ENCODE measurements at regions of chr2 and their contacts with region 1.

Region 1: GRCh38 chr2:42974721-42975717 is 182.6 kb upstream of the HAAO start:
- DNase-seq: peak; percentile 95
- H3K4me3 ChIP-seq: peak overlapping the region; percentile 27 to 32; a peak in 3 of 4 replicates
- H3K27ac ChIP-seq: no peak overlapping the region; a peak in 1 of 4 replicates
- H3K4me1 ChIP-seq: peaks cover 11 to 14% of the 10 kb centered on the region in 2 experiments; a peak in 3 of 4 replicates
- H3K27me3 ChIP-seq: no peaks in the 10 kb centered on the region
- CTCF ChIP-seq: peak; percentile 95
- EP300 ChIP-seq: no peak
- RAD21 ChIP-seq: peak; percentile 97

Region 2: GRCh38 chr2:42706836-42707235 is 268.2 kb before region 1 on chr2:
- CTCF ChIA-PET with region 1: no interaction called
- POLR2A ChIA-PET with region 1: no interaction called
- DNase-seq: no peak
- H3K4me3 ChIP-seq: no peak overlapping the region
- H3K27ac ChIP-seq: no peak overlapping the region
- H3K4me1 ChIP-seq: no peaks in the 10 kb centered on the region; a peak in 1 of 4 replicates
- H3K27me3 ChIP-seq: no peaks in the 10 kb centered on the region
- CTCF ChIP-seq: no peak
- EP300 ChIP-seq: no peak
- RAD21 ChIP-seq: no peak

Region 3: GRCh38 chr2:42964439-42965083 is 10.5 kb before region 1 on chr2:
- CTCF ChIA-PET with region 1: interaction called, 54 read pairs
- POLR2A ChIA-PET with region 1: no interaction called
- DNase-seq: no peak
- H3K4me3 ChIP-seq: no peak overlapping the region
- H3K27ac ChIP-seq: peak overlapping the region; percentile 43 to 85; a peak in 3 of 4 replicates
- H3K4me1 ChIP-seq: peaks cover 38 to 41% of the 10 kb centered on the region in 2 experiments; a peak in 3 of 4 replicates
- H3K27me3 ChIP-seq: no peaks in the 10 kb centered on the region
- CTCF ChIP-seq: no peak
- EP300 ChIP-seq: peak in 1 of 2 experiments; percentile 94; a peak in 2 of 4 replicates
- RAD21 ChIP-seq: no peak

Region 4: GRCh38 chr2:43024515-43025011 is 49.5 kb after region 1 on chr2:
- CTCF ChIA-PET with region 1: interaction called, 29 read pairs
- POLR2A ChIA-PET with region 1: no interaction called
- DNase-seq: peak; percentile 96
- H3K4me3 ChIP-seq: no peak overlapping the region
- H3K27ac ChIP-seq: peak overlapping the region in 1 of 2 experiments; percentile 52; a peak in 1 of 4 replicates
- H3K4me1 ChIP-seq: peaks cover 0 to 14% of the 10 kb centered on the region in 2 experiments; a peak in 1 of 4 replicates
- H3K27me3 ChIP-seq: no peaks in the 10 kb centered on the region
- CTCF ChIP-seq: peak; percentile 97
- EP300 ChIP-seq: peak in 1 of 2 experiments; percentile 33; a peak in 1 of 4 replicates
- RAD21 ChIP-seq: peak; percentile 97

Region 5: DNA sequence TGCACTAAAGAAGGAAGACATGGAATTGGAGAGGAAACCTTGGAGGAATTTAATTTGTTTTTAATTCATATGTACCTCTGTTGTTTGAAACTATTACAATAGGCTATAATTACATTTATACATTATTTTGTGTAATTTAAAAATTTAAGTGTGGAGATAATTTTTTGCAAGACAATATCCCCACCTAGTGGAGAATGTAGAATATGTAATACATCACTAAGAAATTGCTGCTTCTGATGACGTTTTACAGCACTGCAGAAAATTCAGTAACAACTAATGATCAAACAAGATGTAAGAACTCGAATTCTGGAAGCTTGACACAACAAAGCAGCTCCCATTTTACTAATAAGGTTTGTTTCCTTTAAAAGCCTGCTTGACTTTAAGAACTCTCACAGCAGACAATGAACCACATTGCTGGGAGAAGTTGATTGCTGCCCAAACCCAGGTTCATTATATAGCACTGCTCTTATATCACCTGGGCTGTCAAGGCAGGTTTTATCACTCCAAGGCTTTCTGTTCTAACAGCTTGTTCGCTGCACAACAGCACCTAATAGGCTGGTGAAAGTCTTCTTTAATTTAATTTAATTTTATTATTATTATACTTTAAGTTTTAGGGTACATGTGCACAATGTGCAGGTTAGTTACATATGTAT is 567.4 kb after region 1 on chr2:
- CTCF ChIA-PET with region 1: interaction called, 41 read pairs
- POLR2A ChIA-PET with region 1: no interaction called
- DNase-seq: peak; percentile 52
- H3K4me3 ChIP-seq: no peak overlapping the region
- H3K27ac ChIP-seq: peak overlapping the region in 1 of 2 experiments; percentile 28; a peak in 1 of 4 replicates
- H3K4me1 ChIP-seq: peaks cover 8 to 13% of the 10 kb centered on the region in 2 experiments
- H3K27me3 ChIP-seq: no peaks in the 10 kb centered on the region
- CTCF ChIP-seq: peak; percentile 78
- EP300 ChIP-seq: no peak
- RAD21 ChIP-seq: peak; percentile 81